Right cardiac atrium (tissue), 5 donors: ENCODE measurements at regions of chr1 and their contacts with region 1.

Region 1: DNA sequence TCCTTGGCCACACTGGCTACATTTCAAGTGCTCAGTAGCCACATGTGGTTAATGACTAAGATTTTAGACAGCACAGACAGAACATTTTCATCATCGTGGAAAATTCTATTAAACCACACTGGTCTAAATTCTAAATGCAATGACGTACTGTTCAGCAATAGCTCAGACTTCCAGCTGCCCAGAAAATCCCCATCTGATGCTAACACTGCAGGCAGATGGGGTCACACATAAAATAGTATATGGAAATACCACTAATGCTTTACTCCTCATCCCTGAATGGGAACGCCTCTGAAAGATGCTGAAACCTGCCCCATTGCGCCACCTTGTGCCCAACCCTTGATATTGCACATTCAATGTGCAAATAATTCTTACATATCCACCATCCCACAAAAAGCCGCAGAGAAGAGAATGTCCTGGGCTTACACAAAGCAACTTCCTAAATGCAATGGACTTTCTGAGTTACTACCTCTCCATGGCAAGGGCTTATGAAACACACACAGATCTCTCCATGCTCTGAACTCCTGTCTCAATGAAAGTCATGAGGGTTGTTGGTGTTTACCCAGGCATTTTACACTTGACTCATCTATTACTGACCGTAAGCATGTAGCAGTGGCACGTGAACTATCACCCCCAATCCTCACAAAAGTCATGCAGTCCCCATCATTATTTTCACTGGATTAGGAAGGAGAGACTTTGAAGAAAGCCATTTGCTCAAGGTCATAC is 20.3 kb upstream of the SLC5A9 start:
- DNase-seq: peak; percentile 57 to 81 (median 68)
- ATAC-seq: peak; percentile 60 to 74
- H3K4me3 ChIP-seq: no peak overlapping the region
- H3K27ac ChIP-seq: no peak overlapping the region
- H3K4me1 ChIP-seq: no peaks in the 10 kb centered on the region
- H3K27me3 ChIP-seq: no peaks in the 10 kb centered on the region

Region 2: DNA sequence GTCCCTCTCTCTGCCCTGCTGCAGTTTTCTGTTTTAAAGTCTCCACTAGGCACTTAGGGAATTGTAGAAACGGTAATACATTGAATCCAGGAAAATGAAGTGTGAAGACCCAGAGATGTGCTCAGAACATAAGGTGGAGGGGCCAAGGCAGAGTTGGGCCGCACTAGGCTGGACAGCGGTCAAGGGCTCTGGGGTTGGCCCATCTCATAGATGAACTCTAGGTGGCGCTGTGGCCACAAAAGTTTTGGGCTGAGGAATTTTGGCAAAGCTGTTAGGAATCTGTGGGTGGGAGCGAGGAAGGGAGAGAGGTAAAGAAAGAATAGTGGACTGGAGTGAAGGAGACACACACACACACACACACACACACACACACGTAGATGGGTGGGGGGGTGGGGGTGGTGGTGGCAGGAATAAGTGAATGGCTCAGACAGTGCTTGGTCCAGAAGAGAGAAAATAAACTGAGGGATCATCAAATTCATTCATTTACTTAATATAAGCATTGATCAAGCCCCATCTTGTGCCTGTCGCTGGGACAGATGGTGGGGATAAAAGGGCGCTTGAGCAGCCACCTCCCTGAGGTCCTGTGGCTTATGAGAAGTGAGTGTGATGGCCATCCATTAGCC is 463.5 kb before region 1 on chr1:
- intact Hi-C with region 1: loop called in 3 of 4 experiments (anchors 5 to 10 kb)
- DNase-seq: peak; percentile 59 to 81 (median 78)
- ATAC-seq: peak; percentile 85
- H3K4me3 ChIP-seq: no peak overlapping the region
- H3K27ac ChIP-seq: no peak overlapping the region
- H3K4me1 ChIP-seq: no peaks in the 10 kb centered on the region
- H3K27me3 ChIP-seq: no peaks in the 10 kb centered on the region

Region 3: GRCh38 chr1:48109390-48110013 is 92.7 kb before region 1 on chr1:
- intact Hi-C with region 1: loop called (anchors 2 to 5 kb)
- DNase-seq: no peak
- ATAC-seq: peak; percentile 54 to 59
- H3K4me3 ChIP-seq: no peak overlapping the region
- H3K27ac ChIP-seq: no peak overlapping the region
- H3K4me1 ChIP-seq: no peaks in the 10 kb centered on the region
- H3K27me3 ChIP-seq: no peaks in the 10 kb centered on the region

Region 4: GRCh38 chr1:48127735-48128685 is 74.2 kb before region 1 on chr1:
- intact Hi-C with region 1: no loop called
- DNase-seq: no peak
- ATAC-seq: no peak
- H3K4me3 ChIP-seq: no peak overlapping the region
- H3K27ac ChIP-seq: no peak overlapping the region
- H3K4me1 ChIP-seq: no peaks in the 10 kb centered on the region
- H3K27me3 ChIP-seq: no peaks in the 10 kb centered on the region